Naive thymus-derived CD4-positive, alpha-beta T cell (primary cell): ENCODE measurements at regions of chr13 and their contacts with region 1.

Region 1: GRCh38 chr13:33817901-33818706 is at the start of gene RFC3:
- DNase-seq: peak; percentile 78 to 89 (median 87)
- ATAC-seq: peak; percentile 95
- H3K4me3 ChIP-seq: peak within 1 kb of the TSS; percentile 84
- H3K4me3 Mint-ChIP-seq: peak within 1 kb of the TSS; percentile 86 to 100 (median 96)
- H3K27ac ChIP-seq: peak within 1 kb of the TSS; percentile 70
- H3K27ac Mint-ChIP-seq: peak within 1 kb of the TSS; percentile 89 to 98 (median 95)
- H3K4me1 ChIP-seq: peaks cover 0 to 8% of the 10 kb centered on the region in 2 donors
- H3K4me1 Mint-ChIP-seq: peaks cover 14 to 44% (median 25%) of the 10 kb centered on the region in 7 donors
- H3K27me3 ChIP-seq: no peaks in the 10 kb centered on the region
- H3K27me3 Mint-ChIP-seq: peaks cover 0 to 7% (median 0%) of the 10 kb centered on the region in 5 donors
- total RNA-seq, gene RFC3: 4.5 to 29.9 (median 7.1) TPM

Region 2: DNA sequence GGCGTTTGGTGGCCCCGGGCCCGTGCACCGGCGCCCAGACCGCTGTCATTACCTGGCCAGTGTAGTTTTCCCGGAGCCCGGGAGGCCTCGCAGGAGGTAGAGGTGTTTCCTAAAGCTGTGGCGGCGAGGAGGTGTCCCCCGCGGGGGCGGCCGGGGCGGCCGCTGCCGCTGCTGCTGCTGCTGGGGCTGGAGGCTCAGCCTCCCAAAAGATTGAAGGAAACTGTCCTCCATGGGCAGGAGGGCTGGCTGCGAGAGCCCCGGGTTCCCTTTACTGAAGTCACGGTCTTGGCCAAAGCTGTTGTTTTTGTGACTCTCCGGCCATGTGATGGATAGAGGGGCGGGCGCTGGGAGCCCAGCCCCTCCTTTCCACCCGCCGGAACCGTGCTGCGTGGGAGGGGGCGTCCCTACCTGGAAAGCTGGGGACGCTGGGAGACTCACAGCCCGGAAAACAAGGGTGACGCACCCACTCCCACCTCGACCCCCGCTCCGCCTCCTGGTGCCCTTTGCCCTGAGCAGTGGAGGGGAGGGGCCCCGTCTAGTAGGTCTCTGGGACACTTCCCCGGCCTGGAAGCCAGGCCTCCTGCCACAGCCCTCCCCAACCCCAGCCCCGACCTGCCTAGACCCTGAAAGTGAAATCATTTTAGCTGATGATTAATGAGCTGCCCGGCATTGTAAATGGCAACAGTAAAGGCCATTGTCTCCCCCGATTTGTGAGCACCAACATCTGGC is 1390.1 kb before region 1 on chr13 and contains the start of gene N4BP2L1:
- CTCF ChIA-PET with region 1: no interaction called
- POLR2A ChIA-PET with region 1: no interaction called
- intact Hi-C with region 1: loop called in 1 of 2 experiments (anchors 5 kb)
- DNase-seq: peak; percentile 60 to 91 (median 78)
- ATAC-seq: peak; percentile 81
- H3K4me3 ChIP-seq: peak within 1 kb of the TSS; percentile 64
- H3K4me3 Mint-ChIP-seq: peak within 1 kb of the TSS; percentile 90 to 100 (median 94)
- H3K27ac ChIP-seq: peak within 1 kb of the TSS; percentile 98
- H3K27ac Mint-ChIP-seq: peak within 1 kb of the TSS; percentile 95 to 99 (median 97)
- H3K4me1 ChIP-seq: peaks cover 19 to 20% of the 10 kb centered on the region in 2 donors
- H3K4me1 Mint-ChIP-seq: peaks cover 34 to 50% (median 48%) of the 10 kb centered on the region in 7 donors
- H3K27me3 ChIP-seq: no peaks in the 10 kb centered on the region
- H3K27me3 Mint-ChIP-seq: no peaks in the 10 kb centered on the region
- total RNA-seq, gene N4BP2L1: 30.4 to 58.0 (median 47.1) TPM

Region 3: GRCh38 chr13:33610471-33611015 is 207.6 kb before region 1 on chr13:
- CTCF ChIA-PET with region 1: no interaction called
- POLR2A ChIA-PET with region 1: no interaction called
- intact Hi-C with region 1: loop called in 1 of 2 experiments (anchors 5 kb)
- DNase-seq: peak in 5 of 9 donors; percentile 1 to 53 (median 6)
- ATAC-seq: peak; percentile 75
- H3K4me3 ChIP-seq: peak overlapping the region; percentile 14
- H3K4me3 Mint-ChIP-seq: peak overlapping the region; percentile 6 to 84 (median 67)
- H3K27ac ChIP-seq: no peak overlapping the region
- H3K27ac Mint-ChIP-seq: peak overlapping the region in 8 of 9 donors; percentile 34 to 90 (median 70)
- H3K4me1 ChIP-seq: peaks cover 7 to 8% of the 10 kb centered on the region in 2 donors
- H3K4me1 Mint-ChIP-seq: peaks cover 12 to 35% (median 29%) of the 10 kb centered on the region in 7 donors
- H3K27me3 ChIP-seq: no peaks in the 10 kb centered on the region
- H3K27me3 Mint-ChIP-seq: peaks cover 0 to 12% (median 5%) of the 10 kb centered on the region in 5 donors

Region 4: GRCh38 chr13:33787051-33787591 is 31.0 kb before region 1 on chr13:
- CTCF ChIA-PET with region 1: no interaction called
- POLR2A ChIA-PET with region 1: no interaction called
- intact Hi-C with region 1: loop called (anchors 1 to 2 kb)
- DNase-seq: peak in 6 of 9 donors; percentile 8 to 50 (median 31)
- ATAC-seq: peak; percentile 56
- H3K4me3 ChIP-seq: peak overlapping the region; percentile 50
- H3K4me3 Mint-ChIP-seq: peak overlapping the region; percentile 70 to 88 (median 86)
- H3K27ac ChIP-seq: peak overlapping the region; percentile 56
- H3K27ac Mint-ChIP-seq: peak overlapping the region; percentile 70 to 93 (median 87)
- H3K4me1 ChIP-seq: peaks cover 6% of the 10 kb centered on the region in 2 donors
- H3K4me1 Mint-ChIP-seq: peaks cover 2 to 28% (median 15%) of the 10 kb centered on the region in 7 donors
- H3K27me3 ChIP-seq: no peaks in the 10 kb centered on the region
- H3K27me3 Mint-ChIP-seq: peaks cover 0 to 12% (median 4%) of the 10 kb centered on the region in 5 donors

Region 5: DNA sequence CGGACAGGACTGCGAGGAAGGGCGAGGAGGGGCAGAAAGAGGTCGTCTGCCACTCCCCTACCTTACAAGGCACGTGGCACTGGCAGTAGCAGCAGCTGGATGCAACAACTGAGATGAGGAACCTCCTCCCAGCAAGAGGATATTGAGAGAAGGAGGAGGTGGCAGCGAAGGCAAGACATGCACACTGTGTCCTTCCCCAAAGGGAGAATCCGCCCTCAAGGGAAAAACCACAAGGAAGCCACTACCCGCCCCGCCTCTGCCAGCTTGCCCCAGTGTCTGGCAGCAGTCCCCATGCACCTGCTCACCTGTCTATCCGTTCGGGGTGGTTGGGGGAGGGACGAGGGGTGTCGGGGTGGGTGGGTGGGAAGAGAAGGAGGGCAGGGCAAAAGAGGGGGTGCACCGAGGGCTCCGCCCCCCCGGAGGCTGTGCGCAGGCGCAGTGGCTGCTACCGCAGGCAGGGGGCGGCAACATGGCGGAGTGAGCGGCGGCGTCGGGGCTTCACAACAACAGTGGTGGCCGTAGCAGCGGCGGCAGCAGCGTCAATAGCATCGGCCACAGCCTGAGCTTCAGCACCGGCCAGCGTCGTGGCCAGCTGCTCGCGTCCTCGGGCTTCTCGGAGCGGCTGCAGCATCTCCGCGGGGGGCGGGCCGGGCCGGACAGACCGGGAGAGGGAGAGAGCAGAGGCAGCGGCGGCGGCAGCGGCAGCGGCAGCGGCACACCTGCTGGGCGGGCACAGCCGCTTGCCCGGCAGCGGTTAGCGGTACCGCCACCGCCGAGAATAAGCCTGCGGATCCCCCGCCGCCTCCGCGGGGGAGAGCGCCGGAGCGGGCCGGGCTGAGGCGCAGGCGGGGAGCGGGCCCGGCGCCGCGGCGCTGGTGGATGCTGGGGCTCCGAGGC is 1124.0 kb after region 1 on chr13 and contains the start of gene NBEA:
- CTCF ChIA-PET with region 1: no interaction called
- POLR2A ChIA-PET with region 1: no interaction called
- intact Hi-C with region 1: loop called (anchors 5 kb)
- DNase-seq: peak; percentile 73 to 90 (median 85)
- ATAC-seq: peak; percentile 82
- H3K4me3 ChIP-seq: peak within 1 kb of the TSS; percentile 43
- H3K4me3 Mint-ChIP-seq: peak within 1 kb of the TSS; percentile 72 to 94 (median 90)
- H3K27ac ChIP-seq: peak within 1 kb of the TSS; percentile 55
- H3K27ac Mint-ChIP-seq: peak within 1 kb of the TSS in 8 of 9 donors; percentile 18 to 85 (median 78)
- H3K4me1 ChIP-seq: peaks cover 0 to 17% of the 10 kb centered on the region in 2 donors
- H3K4me1 Mint-ChIP-seq: peaks cover 15 to 35% (median 28%) of the 10 kb centered on the region in 7 donors
- H3K27me3 ChIP-seq: peaks cover 0 to 9% of the 10 kb centered on the region in 2 donors
- H3K27me3 Mint-ChIP-seq: peaks cover 37 to 58% (median 47%) of the 10 kb centered on the region in 5 donors
- total RNA-seq, gene NBEA: 0.15 to 6.3 (median 4.3) TPM